ENCODE measurements at regions of chr16 and their contacts with region 1.

Region 1: DNA sequence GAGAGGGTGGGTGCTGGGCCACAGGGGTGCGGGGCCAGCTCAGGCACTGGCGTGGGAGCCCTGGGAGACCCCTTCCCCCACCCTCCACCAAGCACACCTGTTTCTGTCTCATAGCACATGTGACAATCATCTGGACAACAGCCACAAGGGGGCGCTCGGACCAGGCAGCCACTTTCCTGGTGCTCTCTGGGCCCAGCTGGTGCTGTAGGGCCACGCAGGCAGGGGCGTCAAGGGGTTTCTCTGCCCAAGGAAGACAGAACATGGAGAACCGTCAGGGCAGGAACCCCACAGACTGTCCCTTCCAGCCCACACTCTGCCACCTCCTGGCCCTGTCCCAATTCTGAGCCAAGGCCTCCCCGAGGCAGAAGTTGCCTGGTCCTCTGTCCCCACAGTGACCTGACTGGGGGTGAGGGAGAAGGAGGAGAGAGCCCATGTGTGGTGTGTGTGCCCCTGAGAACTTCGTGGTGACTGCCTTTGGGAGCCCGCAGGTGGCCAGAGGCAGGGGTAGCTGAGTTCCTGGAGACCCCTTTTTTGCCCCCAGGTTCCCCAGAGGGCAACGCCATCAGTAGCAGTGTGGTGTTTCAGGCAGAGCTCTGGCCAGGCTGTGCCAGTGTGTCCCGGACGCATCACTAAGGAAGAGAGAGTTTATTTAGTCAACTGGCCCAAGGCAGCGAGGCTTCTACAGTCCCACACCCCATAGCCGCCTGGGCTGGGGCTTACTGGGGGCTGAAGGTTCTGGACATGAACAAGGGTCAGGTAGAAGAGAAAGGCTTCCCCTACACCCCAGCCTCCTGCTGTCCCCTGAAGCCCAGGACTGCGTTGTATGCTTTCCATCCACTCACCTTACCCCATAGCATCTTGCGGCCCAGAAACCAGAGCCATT is 3.1 kb upstream of the SETD6 start:
- DNase-seq: peak; percentile 75 to 96 (median 88)
- ATAC-seq: peak; percentile 25 to 46 (median 44)
- H3K4me3 ChIP-seq: no peak overlapping the region
- H3K27ac ChIP-seq: no peak overlapping the region
- H3K4me1 ChIP-seq: peaks cover 5 to 18% (median 7%) of the 10 kb centered on the region in 3 donors
- H3K27me3 ChIP-seq: no peaks in the 10 kb centered on the region
- CTCF ChIP-seq: peak; percentile 66 to 86 (median 78)

Region 2: DNA sequence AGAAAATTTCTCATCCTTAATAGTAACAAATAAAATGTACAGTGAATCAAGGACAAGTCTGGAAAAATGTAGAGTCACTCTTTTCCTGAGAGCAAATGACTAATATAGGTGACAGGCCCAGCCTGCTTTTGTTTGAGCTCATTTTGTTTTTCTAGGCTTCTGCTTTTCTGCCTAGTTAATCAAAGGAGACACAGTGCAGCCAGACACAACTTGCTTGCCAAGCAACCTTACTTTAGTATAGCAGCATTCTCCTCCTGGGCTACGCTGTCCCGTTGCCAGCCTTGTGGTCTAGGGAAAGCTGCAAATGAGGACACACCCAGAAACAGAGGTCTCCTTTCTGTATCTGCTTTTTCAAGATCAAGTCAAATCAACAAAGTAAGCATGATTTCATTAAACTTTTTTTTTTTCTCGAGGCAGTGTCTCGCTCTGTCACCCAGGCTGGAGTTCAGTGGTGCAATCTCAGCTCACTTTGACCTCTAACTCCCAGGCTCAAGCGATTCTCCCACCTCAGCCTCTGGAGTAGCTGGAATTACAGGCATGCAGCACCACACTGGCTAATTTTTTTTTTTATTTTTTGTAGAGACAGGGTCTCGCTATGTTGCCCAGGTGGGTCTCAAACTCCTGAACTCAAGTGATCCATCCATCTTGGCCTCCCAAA is 102.7 kb before region 1 on chr16:
- intact Hi-C with region 1: no loop called
- DNase-seq: no peak
- ATAC-seq: peak in 3 of 4 donors; percentile 46 to 66 (median 63)
- H3K4me3 ChIP-seq: no peak overlapping the region
- H3K27ac ChIP-seq: no peak overlapping the region
- H3K4me1 ChIP-seq: no peaks in the 10 kb centered on the region
- H3K27me3 ChIP-seq: no peaks in the 10 kb centered on the region
- CTCF ChIP-seq: no peak

Region 3: GRCh38 chr16:58556678-58557077 is 44.5 kb after region 1 on chr16:
- intact Hi-C with region 1: no loop called
- DNase-seq: no peak
- ATAC-seq: no peak
- H3K4me3 ChIP-seq: no peak overlapping the region
- H3K27ac ChIP-seq: no peak overlapping the region
- H3K4me1 ChIP-seq: no peaks in the 10 kb centered on the region
- H3K27me3 ChIP-seq: no peaks in the 10 kb centered on the region
- CTCF ChIP-seq: no peak

Region 4: DNA sequence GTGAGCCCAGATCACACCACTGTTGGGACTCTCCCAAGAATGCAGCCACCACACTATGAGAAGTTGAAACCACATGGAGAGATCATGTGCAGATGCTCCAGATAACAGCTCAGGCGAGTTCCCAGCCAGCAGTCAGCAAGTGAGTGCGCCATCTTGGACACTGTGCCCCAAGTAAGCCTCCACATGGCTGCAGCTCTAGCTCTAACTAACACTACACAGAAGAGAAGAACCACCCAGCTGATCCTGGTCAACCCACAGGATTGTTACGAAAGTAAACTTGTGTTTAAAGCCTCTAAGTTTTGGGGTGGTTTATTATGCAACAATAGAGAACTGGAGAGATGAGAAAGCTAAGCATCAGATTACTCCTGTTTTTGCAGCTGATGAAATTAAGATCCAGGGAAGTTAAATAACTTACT is 146.6 kb after region 1 on chr16:
- intact Hi-C with region 1: loop called in 2 of 3 experiments (anchors 2 to 5 kb)
- DNase-seq: no peak
- ATAC-seq: no peak
- H3K4me3 ChIP-seq: no peak overlapping the region
- H3K27ac ChIP-seq: no peak overlapping the region
- H3K4me1 ChIP-seq: peaks cover 0 to 6% (median 0%) of the 10 kb centered on the region in 3 donors
- H3K27me3 ChIP-seq: no peaks in the 10 kb centered on the region
- CTCF ChIP-seq: no peak

Region 5: DNA sequence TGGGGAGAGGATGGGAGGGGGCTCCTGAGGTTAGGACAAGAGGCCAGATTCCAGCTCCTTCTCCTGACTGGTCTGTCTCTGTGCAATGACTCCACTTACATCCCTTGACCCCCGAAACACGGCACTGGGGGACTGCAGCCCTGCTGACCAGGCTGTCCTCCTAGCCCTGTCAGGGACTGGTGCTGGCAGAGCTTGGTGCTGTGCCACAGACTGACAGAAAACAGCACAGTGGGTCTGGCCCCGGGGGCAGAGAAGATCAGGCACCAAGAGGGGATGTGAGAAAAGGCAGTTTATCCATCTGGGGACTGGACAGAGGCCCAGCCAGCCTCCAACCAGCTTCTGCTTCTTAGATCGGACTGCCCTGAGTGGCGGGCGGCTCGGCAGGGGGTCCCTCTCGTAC is 153.0 kb after region 1 on chr16:
- intact Hi-C with region 1: loop called in 1 of 3 experiments (anchors 2 kb)
- DNase-seq: no peak
- ATAC-seq: no peak
- H3K4me3 ChIP-seq: no peak overlapping the region
- H3K27ac ChIP-seq: no peak overlapping the region
- H3K4me1 ChIP-seq: no peaks in the 10 kb centered on the region
- H3K27me3 ChIP-seq: no peaks in the 10 kb centered on the region
- CTCF ChIP-seq: no peak

Region 6: GRCh38 chr16:58789351-58789750 is 277.2 kb after region 1 on chr16:
- intact Hi-C with region 1: no loop called
- DNase-seq: no peak
- ATAC-seq: no peak
- H3K4me3 ChIP-seq: no peak overlapping the region
- H3K27ac ChIP-seq: no peak overlapping the region
- H3K4me1 ChIP-seq: no peaks in the 10 kb centered on the region
- H3K27me3 ChIP-seq: no peaks in the 10 kb centered on the region
- CTCF ChIP-seq: no peak

Measured in pancreas (tissue), 10 donors.